Dendritic cell treated with granulocyte-macrophage colony-stimulating factor and Interleukin-4, amounts not matched to agents 40 ng/mL and 50 ng/mL, for 4 days (primary cell): ENCODE measurements at regions of chr9 and their contacts with region 1.

Region 1: DNA sequence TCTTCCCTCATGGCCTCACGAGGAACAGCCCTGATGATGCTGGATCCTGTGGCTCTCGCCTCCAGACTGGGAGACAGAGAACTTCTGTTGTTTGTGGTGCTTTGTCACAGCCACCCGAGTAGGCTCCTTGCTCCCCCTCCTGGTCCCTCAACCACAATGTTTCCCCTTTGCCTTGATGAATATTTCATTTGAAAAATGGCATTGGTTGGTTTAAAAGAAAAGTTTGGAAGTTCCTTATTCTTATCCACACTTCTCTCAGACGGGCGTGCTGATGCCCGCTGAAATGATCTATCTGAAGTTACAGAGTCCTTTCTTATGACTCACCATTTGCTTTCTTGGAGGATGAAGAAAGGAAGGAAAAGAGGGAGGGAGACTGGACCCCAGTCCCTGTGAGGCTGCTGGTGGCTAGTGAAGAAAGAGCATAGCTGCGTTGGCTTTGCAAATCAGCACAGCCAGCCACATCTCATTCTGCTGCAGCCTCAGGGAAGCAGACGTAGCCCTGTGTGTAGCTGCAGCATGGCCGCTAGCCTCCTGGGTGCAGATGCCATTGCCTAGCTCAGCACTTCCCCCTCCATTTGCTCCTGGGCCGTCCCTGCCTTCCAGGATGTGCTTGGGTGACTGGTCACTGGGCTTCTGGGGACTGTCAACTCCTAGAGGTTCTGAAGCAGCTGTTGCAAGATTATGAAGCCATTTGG is 185.9 kb downstream of the ERCC6L2 start:
- H3K4me3 Mint-ChIP-seq: peak overlapping the region; percentile 49
- H3K27ac Mint-ChIP-seq: peak overlapping the region; percentile 95
- H3K4me1 Mint-ChIP-seq: peaks cover 62% of the 10 kb centered on the region
- H3K27me3 Mint-ChIP-seq: no peaks in the 10 kb centered on the region

Region 2: GRCh38 chr9:95545831-95546567 is 515.4 kb before region 1 on chr9:
- intact Hi-C with region 1: no loop called
- H3K4me3 Mint-ChIP-seq: no peak overlapping the region
- H3K27ac Mint-ChIP-seq: no peak overlapping the region
- H3K4me1 Mint-ChIP-seq: no peaks in the 10 kb centered on the region
- H3K27me3 Mint-ChIP-seq: peaks cover 17% of the 10 kb centered on the region

Region 3: GRCh38 chr9:95726756-95727155 is 334.7 kb before region 1 on chr9:
- intact Hi-C with region 1: loop called (anchors 5 kb)
- H3K4me3 Mint-ChIP-seq: no peak overlapping the region
- H3K27ac Mint-ChIP-seq: no peak overlapping the region
- H3K4me1 Mint-ChIP-seq: peaks cover 11% of the 10 kb centered on the region
- H3K27me3 Mint-ChIP-seq: peaks cover 21% of the 10 kb centered on the region

Region 4: DNA sequence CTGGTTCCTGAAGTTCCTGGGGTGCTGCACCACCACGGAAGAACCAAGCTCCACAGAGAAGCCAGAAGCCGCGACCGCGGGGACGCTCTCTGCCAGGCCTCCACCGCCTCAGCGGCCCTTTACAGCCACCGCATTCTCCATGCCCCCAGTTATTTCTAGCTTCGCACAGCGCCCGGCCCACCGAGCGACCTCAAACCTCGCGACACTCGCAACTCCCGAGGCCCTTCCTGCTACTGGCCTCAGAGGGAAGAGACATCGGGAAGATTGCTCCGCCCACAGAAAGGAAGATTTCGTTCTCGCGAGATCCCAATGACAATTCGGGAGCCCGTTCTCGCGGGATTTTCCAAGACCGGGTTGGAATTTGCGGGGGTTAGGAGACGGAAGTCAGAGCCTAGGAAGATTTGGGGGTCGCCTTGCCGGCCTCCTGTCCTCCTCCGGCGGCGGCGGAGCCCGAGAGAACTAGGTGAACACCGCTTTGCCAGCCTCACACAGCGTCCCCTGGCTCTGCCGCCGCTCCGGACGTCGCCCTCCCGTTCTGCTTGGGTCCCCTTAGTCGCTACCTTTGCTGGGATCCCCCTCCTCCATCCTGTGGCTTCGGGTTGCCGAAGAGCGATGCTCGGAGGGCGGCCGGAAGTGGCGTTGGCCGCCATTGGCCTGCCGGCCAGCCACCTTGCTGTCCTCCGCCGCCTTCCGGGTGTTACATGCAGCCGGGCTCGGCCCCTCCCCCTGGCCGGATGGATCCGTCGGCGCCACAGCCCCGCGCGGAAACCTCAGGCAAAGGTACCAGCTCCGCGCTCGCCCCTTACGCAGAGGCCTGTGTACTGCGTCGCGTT is 185.9 kb before region 1 on chr9 and contains the start of gene ERCC6L2:
- intact Hi-C with region 1: loop called (anchors 10 kb)
- H3K4me3 Mint-ChIP-seq: no peak within 1 kb of the TSS
- H3K27ac Mint-ChIP-seq: no peak within 1 kb of the TSS
- H3K4me1 Mint-ChIP-seq: peaks cover 10% of the 10 kb centered on the region
- H3K27me3 Mint-ChIP-seq: no peaks in the 10 kb centered on the region

Region 5: GRCh38 chr9:96020792-96021550 is 40.5 kb before region 1 on chr9:
- intact Hi-C with region 1: loop called (anchors 5 kb)
- H3K4me3 Mint-ChIP-seq: peak overlapping the region; percentile 73
- H3K27ac Mint-ChIP-seq: peak overlapping the region; percentile 41
- H3K4me1 Mint-ChIP-seq: peaks cover 27% of the 10 kb centered on the region
- H3K27me3 Mint-ChIP-seq: peaks cover 67% of the 10 kb centered on the region

Region 6: GRCh38 chr9:96109680-96110351 is 48.4 kb after region 1 on chr9:
- intact Hi-C with region 1: loop called (anchors 5 kb)
- H3K4me3 Mint-ChIP-seq: no peak overlapping the region
- H3K27ac Mint-ChIP-seq: peak overlapping the region; percentile 60
- H3K4me1 Mint-ChIP-seq: peaks cover 35% of the 10 kb centered on the region
- H3K27me3 Mint-ChIP-seq: no peaks in the 10 kb centered on the region

Region 7: GRCh38 chr9:96139592-96140295 is 78.3 kb after region 1 on chr9:
- intact Hi-C with region 1: loop called (anchors 10 kb)
- H3K4me3 Mint-ChIP-seq: no peak overlapping the region
- H3K27ac Mint-ChIP-seq: peak overlapping the region; percentile 74
- H3K4me1 Mint-ChIP-seq: peaks cover 57% of the 10 kb centered on the region
- H3K27me3 Mint-ChIP-seq: no peaks in the 10 kb centered on the region

Region 8: GRCh38 chr9:96217754-96218693 is 156.6 kb after region 1 on chr9:
- intact Hi-C with region 1: loop called (anchors 5 kb)
- H3K4me3 Mint-ChIP-seq: peak overlapping the region; percentile 71
- H3K27ac Mint-ChIP-seq: peak overlapping the region; percentile 73
- H3K4me1 Mint-ChIP-seq: peaks cover 35% of the 10 kb centered on the region
- H3K27me3 Mint-ChIP-seq: peaks cover 62% of the 10 kb centered on the region

Region 9: GRCh38 chr9:96478829-96479371 is 417.5 kb after region 1 on chr9:
- intact Hi-C with region 1: no loop called
- H3K4me3 Mint-ChIP-seq: no peak overlapping the region
- H3K27ac Mint-ChIP-seq: no peak overlapping the region
- H3K4me1 Mint-ChIP-seq: no peaks in the 10 kb centered on the region
- H3K27me3 Mint-ChIP-seq: no peaks in the 10 kb centered on the region